Prostate gland (tissue), 2 donors: ENCODE measurements at regions of chr11 and their contacts with region 1.

Region 1: DNA sequence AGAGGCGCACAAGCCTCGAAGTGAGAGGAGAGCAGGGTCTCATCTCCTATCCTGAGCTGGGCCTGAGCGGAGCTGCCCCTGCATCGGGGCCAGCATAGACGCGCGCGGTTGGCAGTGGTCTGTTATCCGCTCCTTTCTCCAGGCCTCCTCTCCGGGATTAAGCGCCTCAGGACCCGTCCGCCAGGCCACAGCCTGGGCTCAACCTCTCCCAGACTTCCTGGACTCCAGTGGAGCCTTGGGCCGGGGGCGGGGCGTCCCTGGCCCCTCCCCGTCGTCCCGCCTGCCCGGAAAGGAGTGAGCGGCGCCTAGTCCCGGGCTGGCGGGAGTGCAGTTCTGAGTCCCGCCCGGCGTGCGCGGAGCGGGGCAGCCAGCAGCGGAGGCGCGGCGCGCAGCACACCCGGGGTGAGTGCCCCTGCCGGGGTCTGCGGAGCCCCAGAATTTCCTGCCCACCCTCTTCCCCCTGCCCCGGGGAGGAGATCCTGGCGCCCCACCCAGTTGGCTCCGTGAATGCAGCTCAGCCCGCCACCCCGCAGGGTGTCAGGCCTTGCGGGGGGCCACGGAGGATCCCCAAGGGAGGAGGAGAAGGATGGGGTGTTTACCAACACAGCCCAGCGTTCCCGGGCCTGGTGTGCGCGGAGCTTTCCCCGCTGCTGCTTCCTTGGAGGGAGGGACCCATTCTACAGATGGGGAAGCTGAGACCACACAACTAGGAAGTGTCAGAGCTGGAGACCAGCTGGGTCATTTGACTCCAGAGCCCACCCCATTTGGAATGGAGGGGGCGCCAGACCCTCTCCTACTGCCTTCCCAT is at the start of gene TCIRG1:
- DNase-seq: peak; percentile 88
- H3K4me3 ChIP-seq: peak within 1 kb of the TSS; percentile 63 to 76
- H3K27ac ChIP-seq: peak within 1 kb of the TSS; percentile 80 to 88
- H3K4me1 ChIP-seq: peaks cover 10% of the 10 kb centered on the region
- H3K27me3 ChIP-seq: no peaks in the 10 kb centered on the region
- CTCF ChIP-seq: peak in 2 of 4 experiments; percentile 40 to 71
- POLR2A ChIP-seq: peak; percentile 99
- total RNA-seq, gene TCIRG1: 114 to 118 TPM

Region 2: GRCh38 chr11:68118706-68119448 is 80.0 kb after region 1 on chr11:
- intact Hi-C with region 1: loop called (anchors 2 kb)
- DNase-seq: no peak
- H3K4me3 ChIP-seq: peak overlapping the region; percentile 76 to 87
- H3K27ac ChIP-seq: peak overlapping the region; percentile 95 to 98
- H3K4me1 ChIP-seq: no peaks in the 10 kb centered on the region
- H3K27me3 ChIP-seq: no peaks in the 10 kb centered on the region
- CTCF ChIP-seq: no peak
- POLR2A ChIP-seq: no peak